CD8-positive, alpha-beta T cell (primary cell): ENCODE measurements at regions of chr19 and their contacts with region 1.

Region 1: GRCh38 chr19:16247353-16248182 is 49.9 kb downstream of the AP1M1 start:
- DNase-seq: peak; percentile 70 to 94 (median 84)
- ATAC-seq: peak; percentile 80
- H3K4me3 ChIP-seq: no peak overlapping the region
- H3K4me3 Mint-ChIP-seq: peak overlapping the region; percentile 60
- H3K27ac ChIP-seq: no peak overlapping the region
- H3K27ac Mint-ChIP-seq: peak overlapping the region; percentile 82
- H3K4me1 ChIP-seq: peaks cover 48% of the 10 kb centered on the region
- H3K4me1 Mint-ChIP-seq: peaks cover 32% of the 10 kb centered on the region
- H3K27me3 ChIP-seq: no peaks in the 10 kb centered on the region
- H3K27me3 Mint-ChIP-seq: no peaks in the 10 kb centered on the region
- CTCF ChIP-seq: peak; percentile 95

Region 2: GRCh38 chr19:16262618-16263017 is 15.1 kb after region 1 on chr19:
- CTCF ChIA-PET with region 1: interaction called, 26 read pairs
- POLR2A ChIA-PET with region 1: interaction called, 4 read pairs
- intact Hi-C with region 1: no loop called
- DNase-seq: no peak
- ATAC-seq: no peak
- H3K4me3 ChIP-seq: no peak overlapping the region
- H3K4me3 Mint-ChIP-seq: peak overlapping the region; percentile 54
- H3K27ac ChIP-seq: no peak overlapping the region
- H3K27ac Mint-ChIP-seq: no peak overlapping the region
- H3K4me1 ChIP-seq: peaks cover 68% of the 10 kb centered on the region
- H3K4me1 Mint-ChIP-seq: peaks cover 63% of the 10 kb centered on the region
- H3K27me3 ChIP-seq: no peaks in the 10 kb centered on the region
- H3K27me3 Mint-ChIP-seq: no peaks in the 10 kb centered on the region
- CTCF ChIP-seq: no peak

Region 3: DNA sequence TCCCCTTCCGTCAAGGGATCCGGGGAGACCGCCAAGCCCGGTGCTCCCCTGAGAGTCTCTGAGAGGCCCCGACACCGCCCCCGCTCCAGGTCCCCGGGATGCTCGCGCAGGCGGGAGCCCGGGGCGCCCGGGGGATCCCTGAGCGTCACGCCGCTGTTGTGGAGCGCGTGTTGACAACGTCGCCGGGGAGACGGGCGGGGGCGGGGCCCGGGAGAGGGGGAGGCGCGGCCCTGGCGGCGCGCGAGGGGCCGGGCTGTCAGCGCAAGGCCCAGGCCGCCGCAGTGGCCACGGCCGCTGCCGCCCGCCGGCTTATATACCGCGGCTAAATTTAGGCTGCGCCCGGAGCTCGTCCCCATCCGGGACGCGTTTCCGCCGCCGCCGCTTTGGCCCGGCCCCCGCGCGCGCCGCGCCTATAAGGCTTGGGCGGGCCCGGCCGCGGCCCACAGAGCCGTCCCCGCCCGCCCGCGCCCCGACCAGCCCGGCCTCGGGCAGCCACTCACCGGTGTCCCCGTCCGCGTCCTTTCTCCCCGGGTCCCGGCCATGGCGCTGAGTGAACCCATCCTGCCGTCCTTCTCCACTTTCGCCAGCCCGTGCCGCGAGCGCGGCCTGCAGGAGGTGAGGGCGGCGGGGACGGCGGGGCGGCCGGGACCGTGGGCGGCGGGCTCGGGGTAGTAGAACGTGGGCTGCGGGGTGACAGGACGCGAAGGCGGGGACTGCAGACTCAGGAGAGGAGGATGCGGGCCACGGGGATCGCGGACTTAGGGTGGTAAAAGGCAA is 77.0 kb after region 1 on chr19 and contains the start of gene KLF2:
- CTCF ChIA-PET with region 1: interaction called, 41 read pairs
- POLR2A ChIA-PET with region 1: interaction called, 138 read pairs
- intact Hi-C with region 1: loop called (anchors 1 kb)
- DNase-seq: peak; percentile 92 to 98 (median 97)
- ATAC-seq: peak; percentile 58
- H3K4me3 ChIP-seq: peak within 1 kb of the TSS; percentile 87 to 100
- H3K4me3 Mint-ChIP-seq: peak within 1 kb of the TSS; percentile 77
- H3K27ac ChIP-seq: peak within 1 kb of the TSS; percentile 94 to 99
- H3K27ac Mint-ChIP-seq: peak within 1 kb of the TSS; percentile 82
- H3K4me1 ChIP-seq: peaks cover 36% of the 10 kb centered on the region
- H3K4me1 Mint-ChIP-seq: peaks cover 40% of the 10 kb centered on the region
- H3K27me3 ChIP-seq: no peaks in the 10 kb centered on the region
- H3K27me3 Mint-ChIP-seq: no peaks in the 10 kb centered on the region
- CTCF ChIP-seq: no peak
- total RNA-seq, gene KLF2: 817 to 847 TPM

Region 4: GRCh38 chr19:16338470-16339360 is 91.1 kb after region 1 on chr19:
- CTCF ChIA-PET with region 1: interaction called, 14 read pairs
- POLR2A ChIA-PET with region 1: no interaction called
- intact Hi-C with region 1: no loop called
- DNase-seq: peak in 6 of 9 experiments; percentile 55 to 83 (median 62)
- ATAC-seq: peak; percentile 49
- H3K4me3 ChIP-seq: peak overlapping the region; percentile 25 to 38
- H3K4me3 Mint-ChIP-seq: peak overlapping the region; percentile 81
- H3K27ac ChIP-seq: peak overlapping the region; percentile 28 to 76
- H3K27ac Mint-ChIP-seq: peak overlapping the region; percentile 94
- H3K4me1 ChIP-seq: peaks cover 71% of the 10 kb centered on the region
- H3K4me1 Mint-ChIP-seq: peaks cover 61% of the 10 kb centered on the region
- H3K27me3 ChIP-seq: no peaks in the 10 kb centered on the region
- H3K27me3 Mint-ChIP-seq: no peaks in the 10 kb centered on the region
- CTCF ChIP-seq: no peak

Region 5: DNA sequence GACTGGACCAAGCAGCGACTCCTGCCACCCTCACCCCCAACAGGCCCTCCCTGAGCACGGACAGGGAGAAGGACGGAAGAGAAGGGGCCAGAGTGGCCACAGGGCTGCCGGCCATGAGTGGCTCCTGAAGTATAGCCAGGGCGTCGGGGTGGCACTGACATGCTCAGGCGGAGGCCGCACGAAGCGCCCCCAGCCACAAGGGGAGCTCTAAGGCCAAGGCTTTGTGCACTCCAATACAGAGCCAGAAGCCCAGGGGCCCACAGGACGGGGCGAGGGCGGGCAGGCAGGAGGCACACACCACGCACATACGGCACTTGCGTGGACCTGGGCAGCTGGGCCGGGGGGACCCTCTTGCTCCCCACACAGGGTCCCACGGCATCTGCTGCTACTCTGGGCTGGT is 129.1 kb after region 1 on chr19:
- CTCF ChIA-PET with region 1: interaction called, 149 read pairs
- POLR2A ChIA-PET with region 1: interaction called, 38 read pairs
- intact Hi-C with region 1: no loop called
- DNase-seq: peak in 7 of 9 experiments; percentile 32 to 68 (median 53)
- ATAC-seq: peak; percentile 39
- H3K4me3 ChIP-seq: no peak overlapping the region
- H3K4me3 Mint-ChIP-seq: no peak overlapping the region
- H3K27ac ChIP-seq: no peak overlapping the region
- H3K27ac Mint-ChIP-seq: peak overlapping the region; percentile 30
- H3K4me1 ChIP-seq: peaks cover 92% of the 10 kb centered on the region
- H3K4me1 Mint-ChIP-seq: peaks cover 85% of the 10 kb centered on the region
- H3K27me3 ChIP-seq: no peaks in the 10 kb centered on the region
- H3K27me3 Mint-ChIP-seq: no peaks in the 10 kb centered on the region
- CTCF ChIP-seq: peak; percentile 52